ENCODE measurements at regions of chr18 and their contacts with region 1.

Region 1: GRCh38 chr18:70709720-70710119 is 420.9 kb downstream of the SOCS6 start:
- DNase-seq: no peak
- H3K4me3 ChIP-seq: no peak overlapping the region
- H3K4me3 Mint-ChIP-seq: no peak overlapping the region
- H3K27ac ChIP-seq: no peak overlapping the region
- H3K27ac Mint-ChIP-seq: no peak overlapping the region
- H3K4me1 ChIP-seq: no peaks in the 10 kb centered on the region
- H3K4me1 Mint-ChIP-seq: no peaks in the 10 kb centered on the region
- H3K27me3 ChIP-seq: no peaks in the 10 kb centered on the region
- H3K27me3 Mint-ChIP-seq: no peaks in the 10 kb centered on the region
- CTCF ChIP-seq: no peak

Region 2: GRCh38 chr18:70659036-70659925 is 50.4 kb before region 1 on chr18:
- intact Hi-C with region 1: loop called in 1 of 2 experiments (anchors 10 kb)
- DNase-seq: no peak
- H3K4me3 ChIP-seq: no peak overlapping the region
- H3K4me3 Mint-ChIP-seq: no peak overlapping the region
- H3K27ac ChIP-seq: no peak overlapping the region
- H3K27ac Mint-ChIP-seq: no peak overlapping the region
- H3K4me1 ChIP-seq: no peaks in the 10 kb centered on the region
- H3K4me1 Mint-ChIP-seq: no peaks in the 10 kb centered on the region
- H3K27me3 ChIP-seq: no peaks in the 10 kb centered on the region
- H3K27me3 Mint-ChIP-seq: peaks cover 0 to 1% (median 0%) of the 10 kb centered on the region in 3 donors
- CTCF ChIP-seq: no peak

Region 3: DNA sequence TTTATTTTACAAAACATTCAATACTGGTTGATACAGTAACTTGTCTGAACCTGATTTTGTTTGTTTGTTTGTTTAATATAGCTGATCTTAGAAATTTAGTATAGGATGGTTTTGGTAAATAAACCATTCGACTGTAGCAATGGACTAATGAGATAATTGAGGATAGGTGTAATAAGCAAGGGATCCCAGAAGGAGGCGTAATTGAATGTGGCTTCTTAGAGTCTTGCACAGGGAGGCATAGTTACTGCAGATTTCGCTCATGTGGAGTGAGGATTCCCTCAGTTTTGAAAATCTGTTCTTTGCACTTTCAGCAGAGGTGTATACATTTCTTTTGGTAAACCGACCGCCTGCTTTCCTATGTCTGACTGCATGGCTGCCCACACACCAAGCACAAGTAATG is 288.8 kb after region 1 on chr18:
- intact Hi-C with region 1: no loop called
- DNase-seq: no peak
- H3K4me3 ChIP-seq: no peak overlapping the region
- H3K4me3 Mint-ChIP-seq: no peak overlapping the region
- H3K27ac ChIP-seq: no peak overlapping the region
- H3K27ac Mint-ChIP-seq: no peak overlapping the region
- H3K4me1 ChIP-seq: no peaks in the 10 kb centered on the region
- H3K4me1 Mint-ChIP-seq: no peaks in the 10 kb centered on the region
- H3K27me3 ChIP-seq: no peaks in the 10 kb centered on the region
- H3K27me3 Mint-ChIP-seq: no peaks in the 10 kb centered on the region
- CTCF ChIP-seq: no peak

Measured in CD14-positive monocyte (primary cell).